GM12878 (cell line): ENCODE measurements at regions of chr6 and their contacts with region 1.

Region 1: DNA sequence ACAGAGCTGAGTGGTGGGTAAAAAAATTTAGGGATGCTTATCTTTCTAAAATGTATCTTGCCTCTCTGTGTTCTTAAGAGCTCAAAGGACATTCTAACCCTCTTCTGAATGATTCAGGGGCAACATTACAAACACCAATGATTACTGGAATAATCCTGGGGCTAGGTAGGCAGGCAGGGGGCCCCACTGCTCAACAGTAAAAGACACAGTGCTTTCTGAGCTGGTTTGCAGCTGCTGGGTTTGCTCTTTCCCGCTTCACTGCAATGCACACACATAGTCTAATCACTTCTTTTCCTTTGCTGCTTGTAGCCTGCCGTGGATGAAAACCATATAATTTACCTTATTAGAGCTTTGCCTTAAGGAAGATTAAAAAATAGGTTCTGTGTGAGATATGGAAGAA is 23.9 kb downstream of the CLDN20 start:
- DNase-seq: no peak
- ATAC-seq: no peak
- H3K4me3 ChIP-seq: no peak overlapping the region
- H3K27ac ChIP-seq: no peak overlapping the region
- H3K4me1 ChIP-seq: no peaks in the 10 kb centered on the region
- H3K27me3 ChIP-seq: no peaks in the 10 kb centered on the region
- CTCF ChIP-seq: no peak
- EP300 ChIP-seq: no peak
- POLR2A ChIP-seq: no peak
- RAD21 ChIP-seq: no peak

Region 2: DNA sequence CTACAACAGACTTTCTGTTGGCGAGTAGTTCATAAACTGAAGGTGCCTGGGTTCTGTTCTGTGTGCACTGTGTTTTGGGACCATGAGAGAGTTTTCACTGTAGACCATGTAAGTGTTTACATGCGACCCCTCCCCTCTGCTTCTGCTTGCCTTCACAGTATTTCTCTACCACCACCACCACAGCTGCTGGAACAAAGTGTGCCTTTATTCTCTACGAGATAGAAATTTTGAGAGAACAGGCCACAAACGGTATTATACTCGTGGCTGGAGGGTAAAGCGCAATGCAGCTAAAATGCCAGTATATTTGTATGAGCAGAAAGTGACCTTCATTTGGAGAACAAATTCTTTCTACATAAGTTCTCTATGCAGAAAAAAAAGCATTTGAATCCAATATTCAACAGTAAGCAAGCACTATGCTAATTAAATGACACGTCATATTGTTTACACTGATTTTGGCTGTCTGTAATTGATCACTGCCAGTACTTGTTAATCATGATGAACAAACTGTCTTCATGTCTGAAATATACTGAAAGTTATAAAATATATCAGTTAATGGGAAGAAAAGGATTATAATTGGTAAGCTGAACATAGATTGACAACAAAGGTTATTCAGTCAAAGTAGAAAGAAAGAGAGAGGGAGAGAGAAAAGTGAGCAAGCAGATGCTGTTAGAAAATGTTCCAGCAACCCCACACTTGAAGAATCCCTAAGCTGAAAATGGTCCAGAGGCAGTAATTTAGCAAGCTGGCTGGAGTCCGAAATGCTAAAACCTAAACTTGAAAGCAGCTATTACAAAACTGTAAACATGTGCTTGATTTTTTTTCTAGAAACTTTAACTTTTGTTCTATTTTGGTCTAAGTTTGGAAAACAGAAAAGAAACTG is 15.2 kb before region 1 on chr6:
- CTCF ChIA-PET with region 1: interaction called, 9 read pairs
- POLR2A ChIA-PET with region 1: interaction called, 5 read pairs
- RAD21 ChIA-PET with region 1: interaction called, 6 read pairs
- SMC1A ChIA-PET with region 1: interaction called, 10 read pairs
- in situ Hi-C with region 1: no loop called
- intact Hi-C with region 1: no loop called
- DNase-seq: no peak
- ATAC-seq: no peak
- H3K4me3 ChIP-seq: no peak overlapping the region
- H3K27ac ChIP-seq: no peak overlapping the region
- H3K4me1 ChIP-seq: no peaks in the 10 kb centered on the region
- H3K27me3 ChIP-seq: no peaks in the 10 kb centered on the region
- CTCF ChIP-seq: no peak
- EP300 ChIP-seq: no peak
- POLR2A ChIP-seq: no peak
- RAD21 ChIP-seq: no peak